HEK293 (cell line): ENCODE measurements at regions of chr5 and their contacts with region 1.

Region 1: DNA sequence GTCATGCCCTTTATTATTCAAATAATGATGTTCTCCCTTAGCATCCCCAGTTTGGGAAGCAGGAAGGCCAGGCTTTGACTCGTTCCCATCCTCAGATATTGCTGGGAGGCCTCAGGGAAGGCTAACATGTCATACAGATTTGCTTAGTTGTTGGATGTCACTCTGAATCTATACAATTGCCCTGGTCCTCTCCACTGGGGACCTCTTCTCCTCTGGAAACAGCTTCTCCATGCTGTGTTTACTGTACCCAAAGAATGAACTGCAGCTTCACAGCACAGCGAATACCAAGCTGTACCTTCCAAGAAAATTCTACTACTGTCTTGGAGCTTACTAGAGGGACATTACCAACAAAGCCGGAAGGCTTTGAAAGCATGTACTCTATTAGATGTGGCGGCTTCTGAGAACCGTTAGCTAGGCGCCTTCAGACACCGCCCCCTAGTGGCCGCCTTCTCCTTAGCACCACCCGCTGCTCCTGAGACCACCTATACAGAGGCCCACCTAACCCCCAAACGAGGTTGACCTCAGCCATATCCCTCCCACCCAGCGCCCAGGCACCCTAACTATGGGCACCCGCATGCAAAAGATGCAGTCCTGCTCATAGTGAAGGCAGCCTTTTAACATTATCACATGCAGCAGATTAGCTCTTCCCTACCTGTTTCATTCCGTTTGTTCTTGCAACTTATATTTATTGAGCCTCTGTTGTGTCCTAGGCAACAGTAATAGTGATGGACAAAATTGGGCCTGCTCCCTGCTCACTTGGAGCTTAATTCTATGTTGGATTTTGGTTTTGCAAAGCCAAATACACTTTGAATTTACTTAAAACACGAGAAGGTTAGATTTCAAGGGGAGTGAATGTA is 34.9 kb upstream of the FOXI1 start:
- H3K4me3 ChIP-seq: no peak overlapping the region
- H3K27ac ChIP-seq: no peak overlapping the region
- H3K4me1 ChIP-seq: peaks cover 4% of the 10 kb centered on the region
- CTCF ChIP-seq: peak; percentile 31; the same call in 1 of the 2 replicates

Region 2: DNA sequence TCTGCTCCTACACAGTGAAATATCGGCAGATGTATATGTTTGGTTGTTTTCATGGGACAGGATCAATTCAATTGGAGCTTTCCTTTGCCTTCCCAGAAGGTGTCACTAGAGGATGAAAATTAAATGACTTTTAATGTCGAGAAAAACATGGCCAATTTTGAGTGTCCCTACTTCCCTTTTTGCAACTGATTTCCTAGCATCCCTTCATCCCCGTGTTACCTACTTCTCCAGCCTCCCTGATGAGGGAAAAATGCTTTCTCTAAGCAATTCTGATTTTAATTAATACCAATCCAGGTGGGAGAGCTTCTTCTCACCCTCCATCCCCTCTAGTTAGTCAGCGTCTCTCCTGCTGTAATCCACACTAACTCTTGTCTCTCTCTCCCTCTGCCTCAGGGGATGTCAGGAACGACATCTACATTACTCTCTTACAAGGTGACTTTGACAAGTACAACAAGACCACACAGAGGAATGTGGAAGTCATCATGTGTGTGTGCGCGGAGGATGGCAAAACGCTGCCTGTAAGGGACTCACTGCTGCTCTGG is 368.8 kb before region 1 on chr5:
- CTCF ChIA-PET with region 1: interaction called, 16 read pairs
- POLR2A ChIA-PET with region 1: no interaction called
- H3K4me3 ChIP-seq: no peak overlapping the region
- H3K27ac ChIP-seq: no peak overlapping the region
- H3K4me1 ChIP-seq: peaks cover 3% of the 10 kb centered on the region; the same call in 1 of the 2 replicates
- CTCF ChIP-seq: peak; percentile 35; the same call in 1 of the 2 replicates

Region 3: GRCh38 chr5:169980418-169981053 is 90.2 kb before region 1 on chr5 and contains the start of gene INSYN2B:
- CTCF ChIA-PET with region 1: interaction called, 29 read pairs
- POLR2A ChIA-PET with region 1: no interaction called
- H3K4me3 ChIP-seq: peak within 1 kb of the TSS; percentile 27
- H3K27ac ChIP-seq: no peak within 1 kb of the TSS
- H3K4me1 ChIP-seq: no peaks in the 10 kb centered on the region
- CTCF ChIP-seq: peak; percentile 81

Region 4: DNA sequence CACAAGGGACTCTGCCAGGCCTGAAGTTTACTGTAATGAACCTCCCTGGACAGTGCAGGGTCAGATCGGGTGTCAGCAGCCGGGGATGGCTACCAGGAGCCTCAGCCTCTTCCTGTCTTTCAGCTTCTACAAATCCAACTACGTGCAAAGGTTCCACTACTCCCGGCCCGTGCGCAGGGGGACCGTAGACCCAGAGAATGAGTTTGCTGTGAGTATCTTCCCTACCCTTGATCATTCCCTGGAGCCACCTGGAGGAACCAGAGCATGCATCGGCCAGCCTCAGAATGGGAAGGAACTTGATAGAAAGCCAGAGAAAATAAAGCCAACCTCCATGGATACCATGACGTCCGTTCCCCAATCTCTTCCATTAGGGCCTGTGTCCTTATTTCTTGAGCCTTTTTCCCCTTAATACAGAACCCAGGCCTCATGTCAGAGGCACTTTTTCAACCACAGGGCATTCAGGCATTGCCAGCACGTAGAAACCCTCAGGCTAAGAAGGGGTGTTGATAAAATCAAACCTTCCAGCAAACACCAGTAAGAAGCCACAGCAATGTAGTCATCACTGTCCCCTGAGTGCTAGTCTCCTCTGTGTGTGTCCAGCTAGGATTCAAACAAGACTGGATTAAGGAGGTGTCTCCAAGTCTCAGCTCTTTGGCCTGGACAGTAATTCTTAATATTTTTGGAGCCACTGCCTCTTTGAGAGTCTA is 14.1 kb before region 1 on chr5:
- CTCF ChIA-PET with region 1: interaction called, 46 read pairs
- POLR2A ChIA-PET with region 1: no interaction called
- H3K4me3 ChIP-seq: no peak overlapping the region
- H3K27ac ChIP-seq: no peak overlapping the region
- H3K4me1 ChIP-seq: no peaks in the 10 kb centered on the region
- CTCF ChIP-seq: no peak

Region 5: GRCh38 chr5:170111088-170111785 is 40.5 kb after region 1 on chr5:
- CTCF ChIA-PET with region 1: no interaction called
- POLR2A ChIA-PET with region 1: no interaction called
- H3K4me3 ChIP-seq: no peak overlapping the region
- H3K27ac ChIP-seq: no peak overlapping the region
- H3K4me1 ChIP-seq: no peaks in the 10 kb centered on the region
- CTCF ChIP-seq: no peak

Region 6: GRCh38 chr5:170195961-170196360 is 125.2 kb after region 1 on chr5:
- CTCF ChIA-PET with region 1: interaction called, 10 read pairs
- POLR2A ChIA-PET with region 1: no interaction called
- H3K4me3 ChIP-seq: no peak overlapping the region
- H3K27ac ChIP-seq: no peak overlapping the region
- H3K4me1 ChIP-seq: no peaks in the 10 kb centered on the region
- CTCF ChIP-seq: no peak